ENCODE measurements at regions of chr2 and their contacts with region 1.

Region 1: DNA sequence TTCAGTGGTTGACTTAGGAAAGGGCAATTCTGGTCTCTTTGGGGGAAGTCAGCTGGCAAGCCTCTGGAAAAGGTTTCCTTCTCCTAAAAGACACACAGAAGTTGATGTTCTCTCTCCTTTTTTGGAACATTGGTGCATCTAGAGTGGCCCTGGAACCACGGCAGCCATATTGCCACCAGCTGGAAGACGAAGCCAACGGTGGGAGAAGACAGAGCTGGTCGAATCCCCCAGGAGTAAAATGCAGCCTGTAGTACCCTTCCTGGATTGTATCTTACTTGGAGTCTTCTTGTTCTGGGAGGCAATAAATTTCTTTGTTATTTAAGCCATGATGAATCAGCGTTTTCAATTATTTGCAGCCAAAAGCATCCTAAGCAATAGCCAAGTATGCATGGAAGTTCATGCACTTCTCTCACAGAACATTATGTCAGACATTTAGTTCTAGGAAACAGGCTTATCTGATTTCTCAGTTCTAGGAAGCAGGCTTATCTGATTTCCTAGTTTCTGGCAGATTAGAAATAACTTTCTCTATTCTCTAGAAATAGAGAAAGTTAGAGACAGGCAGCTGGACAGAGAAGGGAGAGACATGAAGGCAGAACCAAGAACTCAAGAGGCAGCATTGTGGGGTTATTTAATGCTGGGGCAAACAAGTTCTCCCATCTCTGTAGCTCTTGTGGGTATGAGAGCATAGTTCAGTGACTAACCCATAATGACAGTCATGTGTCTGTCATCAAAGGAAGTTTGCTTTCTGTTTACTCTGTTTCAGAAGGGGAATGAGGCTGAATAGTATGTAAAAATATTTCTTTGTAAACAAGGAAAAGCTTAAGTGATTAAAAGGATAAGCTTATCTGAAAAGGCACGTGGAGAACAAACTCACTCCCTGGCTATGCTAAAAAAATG is 40.5 kb upstream of the NABP1 start:
- DNase-seq: peak; percentile 77
- H3K4me3 ChIP-seq: no peak overlapping the region
- H3K27ac ChIP-seq: peak overlapping the region; percentile 40
- H3K4me1 ChIP-seq: peaks cover 41% of the 10 kb centered on the region
- H3K27me3 ChIP-seq: no peaks in the 10 kb centered on the region
- CTCF ChIP-seq: no peak

Region 2: DNA sequence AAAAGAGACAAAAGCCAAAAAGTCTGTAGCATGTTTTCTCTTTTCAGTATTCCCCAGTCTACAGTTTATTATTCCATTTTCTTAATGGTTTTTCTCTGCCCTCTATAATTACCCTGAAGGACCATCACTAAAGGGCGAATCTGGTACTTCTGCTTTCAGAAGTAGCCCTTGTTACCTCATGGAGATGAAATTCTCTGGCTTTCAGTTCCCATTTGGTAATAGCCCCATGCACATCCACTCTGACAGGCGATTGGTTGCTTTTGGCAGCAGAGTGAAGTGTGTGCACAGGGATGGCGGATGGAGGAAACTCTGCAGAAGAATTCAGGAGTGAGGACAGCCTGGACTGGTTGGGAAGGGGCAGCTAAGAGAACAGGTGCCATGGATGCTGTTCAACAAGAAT is 25.8 kb before region 1 on chr2:
- CTCF ChIA-PET with region 1: no interaction called
- dilution Hi-C with region 1: no loop called
- in situ Hi-C with region 1: no loop called
- intact Hi-C with region 1: loop called (anchors 1 kb)
- DNase-seq: no peak
- H3K4me3 ChIP-seq: no peak overlapping the region
- H3K27ac ChIP-seq: peak overlapping the region; percentile 86
- H3K4me1 ChIP-seq: peaks cover 8% of the 10 kb centered on the region
- H3K27me3 ChIP-seq: no peaks in the 10 kb centered on the region
- CTCF ChIP-seq: no peak